ENCODE measurements at regions of chr3 and their contacts with region 1.

Region 1: GRCh38 chr3:76615719-76616118 is 424.2 kb upstream of the ROBO2 start:
- DNase-seq: no peak
- ATAC-seq: no peak
- H3K4me3 ChIP-seq: no peak overlapping the region
- H3K27ac ChIP-seq: no peak overlapping the region
- H3K4me1 ChIP-seq: no peaks in the 10 kb centered on the region
- H3K27me3 ChIP-seq: peaks cover 7% of the 10 kb centered on the region; the same call in 1 of the 2 replicates
- CTCF ChIP-seq: no peak

Region 2: DNA sequence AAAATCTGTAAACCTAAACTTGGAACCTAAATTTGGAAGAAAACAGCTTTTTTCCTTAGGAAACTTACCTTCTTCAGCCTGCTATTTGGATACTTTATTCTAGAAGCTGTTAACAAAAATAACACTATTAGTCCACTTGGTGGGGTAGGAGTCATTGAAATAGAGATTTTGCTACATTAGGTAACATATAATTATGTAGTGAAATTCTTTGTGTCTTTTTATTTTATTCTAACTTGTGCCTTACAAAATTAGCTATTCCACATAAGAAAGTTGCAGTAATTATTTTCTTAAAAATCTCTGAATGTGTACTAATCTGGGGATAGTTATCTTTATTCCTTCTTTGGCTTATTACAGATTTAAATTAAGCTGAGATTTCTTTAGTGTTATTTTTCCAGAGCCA is 63.8 kb after region 1 on chr3:
- CTCF ChIA-PET with region 1: no interaction called
- POLR2A ChIA-PET with region 1: no interaction called
- intact Hi-C with region 1: loop called (anchors 10 kb)
- DNase-seq: peak; percentile 6
- ATAC-seq: no peak
- H3K4me3 ChIP-seq: no peak overlapping the region
- H3K27ac ChIP-seq: no peak overlapping the region
- H3K4me1 ChIP-seq: no peaks in the 10 kb centered on the region
- H3K27me3 ChIP-seq: peaks cover 49% of the 10 kb centered on the region
- CTCF ChIP-seq: 0 out of 2 replicates have a peak, but pooled peaks have one; percentile 24

Region 3: GRCh38 chr3:77146004-77146403 is 530.3 kb after region 1 on chr3:
- CTCF ChIA-PET with region 1: no interaction called
- POLR2A ChIA-PET with region 1: no interaction called
- intact Hi-C with region 1: no loop called
- DNase-seq: no peak
- ATAC-seq: no peak
- H3K4me3 ChIP-seq: no peak overlapping the region
- H3K27ac ChIP-seq: no peak overlapping the region
- H3K4me1 ChIP-seq: no peaks in the 10 kb centered on the region
- H3K27me3 ChIP-seq: peaks cover 62% of the 10 kb centered on the region
- CTCF ChIP-seq: no peak